Activated CD4-positive, alpha-beta memory T cell treated with anti-CD3 and anti-CD28 coated beads for 36 hours (primary cell): ENCODE measurements at regions of chr10 and their contacts with region 1.

Region 1: DNA sequence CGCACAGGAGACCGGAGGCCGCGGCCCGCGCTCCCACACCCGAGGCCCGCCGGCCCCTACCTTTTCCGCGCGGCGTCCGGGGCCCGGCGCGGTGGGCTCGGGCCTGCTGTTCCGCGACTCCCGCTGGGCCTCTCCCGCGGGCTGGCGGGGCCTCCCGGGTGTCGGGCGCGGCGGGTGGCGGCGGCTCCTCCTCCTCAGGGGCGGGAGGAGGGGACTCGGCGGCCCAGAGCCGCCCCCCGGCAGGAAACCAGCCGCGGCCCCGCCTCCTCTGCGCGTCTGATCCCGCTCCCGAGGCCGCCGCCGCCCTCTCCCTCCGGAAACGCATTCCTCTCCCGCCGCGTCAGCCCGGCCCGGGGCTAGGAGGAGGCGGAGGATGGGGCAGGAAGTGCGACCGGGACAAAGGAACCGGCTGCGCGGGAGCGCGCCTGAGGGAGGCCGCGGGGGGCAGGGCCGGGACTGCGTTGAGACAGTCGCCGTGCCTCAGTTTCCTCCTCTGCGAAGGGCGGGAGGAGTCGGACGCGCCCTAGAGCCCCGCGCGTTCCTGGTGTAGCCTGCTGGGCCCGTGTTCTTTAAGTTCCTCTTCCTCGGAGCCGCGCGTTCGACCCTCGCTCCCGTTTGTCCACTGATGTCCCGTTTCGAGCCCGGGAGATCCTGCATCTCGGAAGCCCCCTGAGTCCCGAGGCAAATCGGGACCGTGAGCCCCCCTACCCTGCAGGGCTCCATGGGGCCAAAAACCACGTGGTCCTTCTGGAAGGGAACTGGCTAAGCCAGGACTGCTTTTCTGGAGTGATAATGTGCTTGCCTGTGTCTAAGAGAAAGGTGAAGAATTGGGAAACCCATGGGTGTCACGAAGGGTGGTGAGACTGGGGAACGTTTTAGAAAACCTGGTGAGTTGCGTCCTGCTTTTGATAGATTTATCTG is at the start of gene ITGB1:
- DNase-seq: peak; percentile 90
- H3K4me3 Mint-ChIP-seq: peak within 1 kb of the TSS; percentile 90
- H3K27ac Mint-ChIP-seq: peak within 1 kb of the TSS; percentile 99
- H3K4me1 Mint-ChIP-seq: peaks cover 55% of the 10 kb centered on the region
- H3K27me3 Mint-ChIP-seq: peaks cover 4% of the 10 kb centered on the region
- total RNA-seq, gene ITGB1: 113 to 117 TPM

Region 2: GRCh38 chr10:32239770-32240169 is 718.6 kb before region 1 on chr10:
- CTCF ChIA-PET with region 1: no interaction called
- POLR2A ChIA-PET with region 1: no interaction called
- intact Hi-C with region 1: loop called (anchors 10 kb)
- DNase-seq: no peak
- H3K4me3 Mint-ChIP-seq: no peak overlapping the region
- H3K27ac Mint-ChIP-seq: no peak overlapping the region
- H3K4me1 Mint-ChIP-seq: peaks cover 14% of the 10 kb centered on the region
- H3K27me3 Mint-ChIP-seq: peaks cover 2% of the 10 kb centered on the region

Region 3: GRCh38 chr10:32378363-32379317 is 579.7 kb before region 1 on chr10:
- CTCF ChIA-PET with region 1: no interaction called
- POLR2A ChIA-PET with region 1: no interaction called
- intact Hi-C with region 1: loop called (anchors 2 kb)
- DNase-seq: peak; percentile 96
- H3K4me3 Mint-ChIP-seq: no peak overlapping the region
- H3K27ac Mint-ChIP-seq: no peak overlapping the region
- H3K4me1 Mint-ChIP-seq: peaks cover 22% of the 10 kb centered on the region
- H3K27me3 Mint-ChIP-seq: no peaks in the 10 kb centered on the region

Region 4: DNA sequence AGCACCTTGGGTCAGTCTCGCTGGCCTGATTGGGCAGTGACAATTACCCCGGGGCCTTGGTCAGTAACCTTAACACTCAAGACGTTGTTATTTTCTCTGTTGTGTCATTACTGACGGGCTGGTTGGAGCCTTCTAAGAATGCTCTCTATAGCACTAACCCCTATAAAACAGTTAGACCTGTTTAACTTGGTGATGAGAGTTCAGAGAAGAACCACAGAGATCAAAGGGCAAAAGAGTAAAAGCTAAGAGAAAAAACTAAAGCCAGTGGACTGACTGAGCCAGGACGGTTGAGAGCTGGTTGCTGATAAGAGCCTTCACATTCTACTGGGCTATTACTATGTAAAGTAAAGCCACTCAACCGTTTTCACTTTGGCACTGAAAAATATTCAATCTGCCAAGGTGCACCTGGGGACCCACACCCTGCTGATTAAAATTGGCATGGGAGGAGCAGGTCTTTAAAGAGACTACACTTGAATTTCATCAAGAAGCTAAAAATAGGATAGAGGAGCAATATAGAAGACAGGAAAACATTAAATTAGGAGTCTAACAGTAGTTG is 13.3 kb after region 1 on chr10:
- CTCF ChIA-PET with region 1: interaction called, 4 read pairs
- POLR2A ChIA-PET with region 1: interaction called, 5 read pairs
- intact Hi-C with region 1: loop called (anchors 1 kb)
- DNase-seq: no peak
- H3K4me3 Mint-ChIP-seq: no peak overlapping the region
- H3K27ac Mint-ChIP-seq: no peak overlapping the region
- H3K4me1 Mint-ChIP-seq: peaks cover 33% of the 10 kb centered on the region
- H3K27me3 Mint-ChIP-seq: no peaks in the 10 kb centered on the region

Region 5: DNA sequence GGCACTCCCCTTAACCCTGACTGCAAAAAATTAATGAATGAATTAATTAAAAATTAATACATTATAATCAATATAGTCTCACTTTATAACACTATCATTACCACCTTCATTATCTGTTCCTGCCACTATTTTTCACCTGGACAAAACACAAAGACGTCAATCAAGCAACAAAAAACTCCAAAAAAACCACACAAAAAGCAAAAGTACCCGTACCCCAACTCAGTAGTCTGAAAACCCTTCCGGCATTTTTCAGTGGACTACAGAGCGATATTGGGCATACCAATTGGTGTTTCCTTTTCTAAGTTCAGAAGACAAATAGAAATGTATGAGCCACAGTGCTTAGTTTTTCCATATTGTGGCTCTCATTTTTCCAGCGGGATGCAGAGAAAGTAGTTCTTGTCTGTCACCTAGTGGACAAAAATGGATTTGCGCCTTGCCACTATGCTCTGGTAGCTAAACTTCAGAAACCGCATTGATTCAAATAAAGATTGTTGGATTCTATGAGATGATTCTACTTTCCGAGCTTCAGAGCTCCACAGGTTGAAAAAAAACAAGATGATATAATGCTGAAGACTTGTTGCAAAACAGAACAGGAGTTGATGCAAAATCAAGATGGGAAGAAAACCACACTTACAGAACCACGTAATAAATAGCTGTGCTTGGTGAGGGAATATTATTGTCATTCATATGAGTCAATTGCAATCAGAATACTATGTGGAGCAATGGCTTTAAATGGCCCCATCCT is 50.3 kb after region 1 on chr10:
- CTCF ChIA-PET with region 1: interaction called, 8 read pairs
- POLR2A ChIA-PET with region 1: interaction called, 9 read pairs
- intact Hi-C with region 1: loop called (anchors 1 kb)
- DNase-seq: peak; percentile 79
- H3K4me3 Mint-ChIP-seq: peak overlapping the region; percentile 66
- H3K27ac Mint-ChIP-seq: peak overlapping the region; percentile 76
- H3K4me1 Mint-ChIP-seq: peaks cover 43% of the 10 kb centered on the region
- H3K27me3 Mint-ChIP-seq: no peaks in the 10 kb centered on the region

Region 6: GRCh38 chr10:33134011-33134751 is 175.8 kb after region 1 on chr10:
- CTCF ChIA-PET with region 1: no interaction called
- POLR2A ChIA-PET with region 1: interaction called, 3 read pairs
- intact Hi-C with region 1: loop called (anchors 2 kb)
- DNase-seq: peak; percentile 90
- H3K4me3 Mint-ChIP-seq: peak overlapping the region; percentile 50
- H3K27ac Mint-ChIP-seq: peak overlapping the region; percentile 90
- H3K4me1 Mint-ChIP-seq: peaks cover 91% of the 10 kb centered on the region
- H3K27me3 Mint-ChIP-seq: peaks cover 1% of the 10 kb centered on the region

Region 7: DNA sequence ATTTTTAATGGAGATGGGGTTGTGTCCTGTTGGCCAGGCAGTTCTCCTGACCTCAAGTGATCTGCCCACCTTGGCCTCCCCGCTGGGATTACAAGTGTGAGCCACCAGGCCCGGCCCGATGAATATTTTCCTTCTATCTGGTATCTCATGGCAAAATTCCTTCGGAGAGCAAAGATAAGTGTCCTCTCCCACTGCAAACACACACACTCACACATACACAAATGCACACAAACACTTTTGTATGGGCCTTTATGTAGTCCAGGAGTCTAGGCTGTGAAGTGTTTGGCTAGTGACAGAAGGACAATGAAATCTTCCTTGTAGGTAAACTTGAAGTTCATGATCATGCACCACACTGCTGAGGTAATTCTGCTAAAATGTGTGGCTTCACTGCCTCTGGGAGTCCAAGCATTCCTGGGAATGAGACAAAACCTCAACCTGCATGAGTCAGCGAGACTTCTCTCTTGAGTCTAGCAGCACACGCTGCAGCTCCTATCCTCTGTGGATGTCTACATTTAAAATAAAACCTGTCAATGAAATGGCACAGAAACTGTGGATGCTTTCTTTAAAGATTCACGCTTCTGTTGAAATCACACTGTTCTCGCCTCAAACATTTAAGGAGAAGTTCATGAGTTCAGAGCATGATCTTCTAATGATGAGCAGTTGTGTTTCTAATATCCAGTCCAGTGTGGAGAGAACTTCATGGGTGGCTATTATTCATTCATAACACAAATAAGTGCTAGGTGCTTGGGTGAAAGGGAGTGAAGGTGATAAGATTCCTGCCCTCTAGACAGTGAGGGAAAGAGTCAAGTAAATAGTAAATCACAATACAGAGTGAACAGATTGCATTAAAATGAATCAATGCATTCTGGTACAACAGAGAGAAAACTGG is 279.6 kb after region 1 on chr10:
- CTCF ChIA-PET with region 1: no interaction called
- POLR2A ChIA-PET with region 1: no interaction called
- intact Hi-C with region 1: no loop called
- DNase-seq: no peak
- H3K4me3 Mint-ChIP-seq: no peak overlapping the region
- H3K27ac Mint-ChIP-seq: no peak overlapping the region
- H3K4me1 Mint-ChIP-seq: no peaks in the 10 kb centered on the region
- H3K27me3 Mint-ChIP-seq: peaks cover 12% of the 10 kb centered on the region

Region 8: GRCh38 chr10:33248638-33249037 is 290.3 kb after region 1 on chr10:
- CTCF ChIA-PET with region 1: no interaction called
- POLR2A ChIA-PET with region 1: interaction called, 3 read pairs
- intact Hi-C with region 1: loop called (anchors 5 kb)
- DNase-seq: no peak
- H3K4me3 Mint-ChIP-seq: peak overlapping the region; percentile 38
- H3K27ac Mint-ChIP-seq: peak overlapping the region; percentile 64
- H3K4me1 Mint-ChIP-seq: peaks cover 60% of the 10 kb centered on the region
- H3K27me3 Mint-ChIP-seq: peaks cover 11% of the 10 kb centered on the region

Region 9: GRCh38 chr10:33386971-33387370 is 428.6 kb after region 1 on chr10:
- CTCF ChIA-PET with region 1: no interaction called
- POLR2A ChIA-PET with region 1: no interaction called
- intact Hi-C with region 1: no loop called
- DNase-seq: no peak
- H3K4me3 Mint-ChIP-seq: no peak overlapping the region
- H3K27ac Mint-ChIP-seq: no peak overlapping the region
- H3K4me1 Mint-ChIP-seq: no peaks in the 10 kb centered on the region
- H3K27me3 Mint-ChIP-seq: peaks cover 29% of the 10 kb centered on the region